ENCODE measurements at regions of chr4 and their contacts with region 1.

Region 1: DNA sequence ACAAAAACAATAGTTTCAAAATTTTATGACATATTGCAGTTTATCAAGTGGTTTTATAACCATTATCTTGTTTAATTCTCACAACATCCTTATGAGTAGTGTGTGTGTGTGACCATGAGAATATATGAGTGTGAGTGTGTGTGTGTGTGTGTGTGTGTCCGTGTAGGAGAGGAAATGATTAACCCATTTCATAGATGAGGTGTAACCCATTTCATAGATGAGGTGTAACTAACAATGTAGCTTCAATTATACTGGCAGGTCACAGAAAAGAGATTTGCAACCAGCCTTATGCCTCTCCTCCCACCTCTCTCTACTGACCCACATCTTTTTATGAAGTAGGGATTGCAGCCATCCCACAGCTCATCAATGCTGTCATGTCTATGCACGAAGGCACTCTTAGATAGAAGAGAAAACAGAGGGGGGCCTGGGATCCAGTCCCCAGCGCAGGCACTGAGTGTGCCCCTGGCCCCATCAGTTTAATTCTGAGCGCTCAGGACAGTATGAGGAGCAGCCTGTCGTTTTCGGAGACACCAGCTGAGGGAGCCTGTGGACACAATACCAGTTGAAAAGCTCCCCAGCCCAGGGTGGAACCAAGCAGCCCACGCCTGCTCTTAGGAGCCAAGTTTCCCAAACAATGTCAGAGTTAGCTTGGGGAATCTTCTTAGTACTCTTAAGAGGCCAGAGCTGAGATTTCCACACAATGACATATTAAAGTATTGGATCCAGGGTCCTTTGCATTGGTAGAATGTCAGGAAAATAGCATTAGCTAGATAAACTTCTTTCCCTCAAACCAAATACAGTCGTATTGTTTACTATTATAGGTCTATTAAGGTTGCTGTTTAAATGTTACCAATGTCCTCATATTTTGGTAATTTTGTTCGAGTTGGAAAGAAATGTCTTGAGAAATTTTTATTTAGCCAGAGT is 88.6 kb downstream of the PALLD start:
- DNase-seq: peak; percentile 26 to 90
- H3K4me3 ChIP-seq: no peak overlapping the region
- H3K27ac ChIP-seq: no peak overlapping the region
- H3K4me1 ChIP-seq: peaks cover 3 to 24% of the 10 kb centered on the region in 2 donors
- H3K27me3 ChIP-seq: no peaks in the 10 kb centered on the region
- CTCF ChIP-seq: peak; percentile 73 to 85 (median 80)

Region 2: GRCh38 chr4:168248176-168248710 is 337.2 kb before region 1 on chr4:
- intact Hi-C with region 1: no loop called
- DNase-seq: no peak
- H3K4me3 ChIP-seq: no peak overlapping the region
- H3K27ac ChIP-seq: no peak overlapping the region
- H3K4me1 ChIP-seq: no peaks in the 10 kb centered on the region
- H3K27me3 ChIP-seq: no peaks in the 10 kb centered on the region
- CTCF ChIP-seq: no peak

Region 3: GRCh38 chr4:168631241-168632162 is 46.1 kb after region 1 on chr4:
- intact Hi-C with region 1: loop called (anchors 2 kb)
- DNase-seq: peak in 1 of 2 donors; percentile 73
- H3K4me3 ChIP-seq: peak overlapping the region; percentile 69 to 72
- H3K27ac ChIP-seq: peak overlapping the region; percentile 70 to 81
- H3K4me1 ChIP-seq: peaks cover 4 to 25% of the 10 kb centered on the region in 2 donors
- H3K27me3 ChIP-seq: no peaks in the 10 kb centered on the region
- CTCF ChIP-seq: peak; percentile 40 to 50 (median 47)

Region 4: GRCh38 chr4:168710353-168710946 is 125.0 kb after region 1 on chr4:
- intact Hi-C with region 1: loop called (anchors 5 kb)
- DNase-seq: peak in 1 of 2 donors; percentile 81
- H3K4me3 ChIP-seq: no peak overlapping the region
- H3K27ac ChIP-seq: peak overlapping the region; percentile 81 to 87
- H3K4me1 ChIP-seq: peaks cover 8 to 21% of the 10 kb centered on the region in 2 donors
- H3K27me3 ChIP-seq: no peaks in the 10 kb centered on the region
- CTCF ChIP-seq: peak; percentile 13 to 76 (median 70)

Region 5: GRCh38 chr4:168831919-168832762 is 246.7 kb after region 1 on chr4:
- intact Hi-C with region 1: loop called (anchors 5 kb)
- DNase-seq: peak; percentile 31 to 93
- H3K4me3 ChIP-seq: peak overlapping the region; percentile 90 to 95
- H3K27ac ChIP-seq: peak overlapping the region; percentile 97 to 99
- H3K4me1 ChIP-seq: peaks cover 11 to 18% of the 10 kb centered on the region in 2 donors
- H3K27me3 ChIP-seq: no peaks in the 10 kb centered on the region
- CTCF ChIP-seq: peak in 1 of 3 experiments; percentile 15

Region 6: GRCh38 chr4:169010125-169011023 is 424.9 kb after region 1 on chr4 and contains the start of gene CBR4:
- intact Hi-C with region 1: loop called (anchors 10 kb)
- DNase-seq: peak; percentile 95 to 99
- H3K4me3 ChIP-seq: peak within 1 kb of the TSS; percentile 67 to 68
- H3K27ac ChIP-seq: peak within 1 kb of the TSS; percentile 85 to 91
- H3K4me1 ChIP-seq: peaks cover 0 to 10% of the 10 kb centered on the region in 2 donors
- H3K27me3 ChIP-seq: no peaks in the 10 kb centered on the region
- CTCF ChIP-seq: peak in 1 of 3 experiments; percentile 45
- total RNA-seq, gene CBR4: 0.53 TPM

Measured in ascending aorta (tissue), 2 donors.